A673 (cell line): ENCODE measurements at regions of chr19 and their contacts with region 1.

Region 1: DNA sequence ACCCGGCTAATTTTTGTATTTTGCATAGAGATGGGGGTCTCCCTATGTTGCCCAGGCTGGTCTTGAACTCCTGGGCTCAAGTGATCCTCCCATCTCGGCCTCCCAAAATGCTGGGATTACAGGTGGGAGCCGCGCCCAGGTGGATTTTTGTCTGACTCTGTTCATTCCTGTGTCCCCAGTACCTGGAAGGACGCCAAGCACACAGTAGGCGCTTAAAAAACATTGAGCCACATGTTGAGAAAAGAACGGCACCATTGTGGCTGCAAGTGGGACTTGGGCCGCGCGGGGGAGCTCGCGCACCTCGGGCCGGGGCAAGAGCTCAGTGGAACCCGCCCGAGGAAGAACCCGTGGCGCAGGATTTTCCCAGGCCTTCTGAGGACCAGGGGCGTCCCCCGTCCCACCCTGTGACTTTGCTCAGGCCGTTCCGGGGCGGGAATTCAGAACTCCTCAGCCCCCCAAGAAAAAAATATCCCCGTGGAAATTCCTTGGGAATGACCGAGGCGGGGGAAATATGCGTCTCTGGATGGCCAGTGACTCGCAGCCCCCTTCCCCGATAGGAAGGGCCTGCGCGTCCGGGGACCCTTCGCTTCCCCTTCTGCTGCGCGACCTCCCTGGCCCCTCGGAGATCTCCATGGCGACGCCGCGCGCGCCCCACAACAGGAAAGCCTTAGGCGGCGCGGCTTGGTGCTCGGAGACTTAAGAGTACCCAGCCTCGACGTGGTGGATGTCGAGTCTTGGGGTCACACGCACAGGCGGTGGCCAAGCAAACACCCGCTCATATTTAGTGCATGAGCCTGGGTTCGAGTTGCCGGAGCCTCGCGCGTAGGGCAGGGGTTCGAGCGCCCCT is 1.4 kb upstream of the ICAM1 start:
- DNase-seq: peak; percentile 86
- H3K4me3 ChIP-seq: peak overlapping the region; percentile 32
- H3K27ac ChIP-seq: no peak overlapping the region
- H3K4me1 ChIP-seq: peaks cover 6% of the 10 kb centered on the region
- H3K27me3 ChIP-seq: no peaks in the 10 kb centered on the region
- CTCF ChIP-seq: peak; percentile 93

Region 2: GRCh38 chr19:10259162-10259905 is 10.2 kb before region 1 on chr19:
- CTCF ChIA-PET with region 1: interaction called, 21 read pairs
- POLR2A ChIA-PET with region 1: no interaction called
- intact Hi-C with region 1: no loop called
- DNase-seq: peak; percentile 94
- H3K4me3 ChIP-seq: no peak overlapping the region
- H3K27ac ChIP-seq: no peak overlapping the region
- H3K4me1 ChIP-seq: no peaks in the 10 kb centered on the region
- H3K27me3 ChIP-seq: no peaks in the 10 kb centered on the region
- CTCF ChIP-seq: peak; percentile 87

Region 3: GRCh38 chr19:10289167-10289835 is 19.7 kb after region 1 on chr19:
- CTCF ChIA-PET with region 1: interaction called, 15 read pairs
- POLR2A ChIA-PET with region 1: no interaction called
- intact Hi-C with region 1: no loop called
- DNase-seq: peak; percentile 92
- H3K4me3 ChIP-seq: peak overlapping the region; percentile 47
- H3K27ac ChIP-seq: peak overlapping the region; percentile 44
- H3K4me1 ChIP-seq: peaks cover 56% of the 10 kb centered on the region
- H3K27me3 ChIP-seq: peaks cover 19% of the 10 kb centered on the region
- CTCF ChIP-seq: no peak

Region 4: DNA sequence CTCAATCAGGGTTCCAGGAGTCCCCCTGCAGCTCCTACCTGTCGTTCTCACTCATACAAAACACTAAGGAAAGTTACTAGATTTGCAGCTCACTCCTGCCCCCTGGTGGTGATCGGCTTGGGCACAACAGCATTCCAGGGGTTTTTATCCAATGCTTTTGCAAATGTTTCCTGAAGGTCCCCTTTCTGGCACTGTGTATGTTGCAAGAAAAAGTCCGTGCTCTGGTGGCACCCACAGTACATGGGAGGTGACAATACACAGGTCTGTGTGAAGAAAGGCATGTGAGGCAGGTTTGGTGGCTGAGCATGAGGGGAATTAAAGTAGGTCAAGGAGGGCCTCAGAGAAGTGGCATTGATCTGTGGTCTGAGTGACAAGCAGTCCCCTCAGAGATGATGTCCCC is 119.4 kb after region 1 on chr19:
- CTCF ChIA-PET with region 1: interaction called, 50 read pairs
- POLR2A ChIA-PET with region 1: no interaction called
- intact Hi-C with region 1: loop called (anchors 1 kb)
- DNase-seq: peak; percentile 86
- H3K4me3 ChIP-seq: no peak overlapping the region
- H3K27ac ChIP-seq: no peak overlapping the region
- H3K4me1 ChIP-seq: no peaks in the 10 kb centered on the region
- H3K27me3 ChIP-seq: no peaks in the 10 kb centered on the region
- CTCF ChIP-seq: peak; percentile 97